PC-9 (cell line): ENCODE measurements at regions of chr1 and their contacts with region 1.

Region 1: DNA sequence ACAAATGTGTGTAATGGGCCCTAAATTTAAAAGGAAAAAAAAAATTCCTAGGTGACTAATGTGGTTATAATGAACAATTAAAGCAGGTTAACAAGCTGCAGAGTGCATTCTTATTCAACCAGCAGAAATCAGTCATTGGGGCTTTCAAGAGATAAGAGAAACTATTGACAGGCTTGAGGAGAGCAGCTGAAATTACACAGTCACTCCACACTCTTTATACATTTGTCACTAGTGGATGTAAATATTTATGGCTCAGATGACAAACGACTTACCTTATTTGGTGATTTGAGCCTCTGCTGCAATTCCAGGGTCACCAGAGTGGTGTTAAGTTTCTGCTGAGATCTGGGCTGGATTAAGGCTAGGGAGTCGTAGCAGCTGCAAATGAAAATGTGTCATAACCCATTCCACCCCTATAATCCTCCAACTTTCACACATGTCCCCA is 896.3 kb downstream of the TTLL7 start:
- DNase-seq: peak; percentile 45 to 97
- H3K4me3 ChIP-seq: no peak overlapping the region
- H3K27ac ChIP-seq: peak overlapping the region; percentile 65
- H3K4me1 ChIP-seq: peaks cover 41% of the 10 kb centered on the region
- H3K27me3 ChIP-seq: no peaks in the 10 kb centered on the region
- CTCF ChIP-seq: no peak

Region 2: GRCh38 chr1:83055410-83056134 is 47.1 kb before region 1 on chr1:
- CTCF ChIA-PET with region 1: no interaction called
- POLR2A ChIA-PET with region 1: no interaction called
- intact Hi-C with region 1: loop called (anchors 1 kb)
- DNase-seq: peak; percentile 67 to 99
- H3K4me3 ChIP-seq: peak overlapping the region; percentile 10; the same call in 1 of the 2 replicates
- H3K27ac ChIP-seq: peak overlapping the region; percentile 82
- H3K4me1 ChIP-seq: peaks cover 56% of the 10 kb centered on the region
- H3K27me3 ChIP-seq: no peaks in the 10 kb centered on the region
- CTCF ChIP-seq: no peak

Region 3: DNA sequence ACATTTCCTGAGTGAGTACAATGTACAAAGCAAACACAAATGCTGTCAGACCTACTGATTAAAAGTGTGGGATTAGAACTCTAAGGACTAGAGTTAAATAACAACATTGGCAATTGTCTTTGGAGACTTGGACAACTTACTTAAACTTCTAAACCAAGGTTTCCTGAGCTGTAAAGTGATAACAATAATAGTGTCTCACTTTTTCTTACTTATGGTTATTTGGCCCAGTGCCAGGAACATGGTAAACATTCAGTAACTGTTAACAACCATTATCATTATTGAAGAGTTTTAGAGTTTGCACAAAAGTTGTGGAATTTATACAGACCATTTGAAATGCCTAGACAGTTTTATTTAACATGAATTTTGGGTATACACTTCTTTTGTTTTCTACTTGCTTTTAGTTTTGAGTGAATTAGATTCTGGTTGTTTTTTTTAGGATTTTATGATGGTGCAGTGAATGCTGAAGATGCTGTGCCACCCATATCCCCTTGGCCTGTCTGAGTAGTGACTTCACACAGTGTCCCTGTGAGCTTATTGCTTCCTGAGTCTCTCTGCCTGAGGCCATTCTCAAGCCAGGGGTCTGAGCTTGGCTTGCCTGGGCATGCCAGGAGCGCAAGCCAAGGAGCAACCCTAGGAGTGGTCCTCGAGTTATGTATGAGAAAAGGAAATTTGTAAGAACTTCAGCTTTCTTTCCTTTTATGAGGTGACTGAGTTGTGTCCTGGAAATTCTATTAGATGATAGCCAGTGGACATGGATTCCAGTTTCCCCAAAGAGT is 36.5 kb before region 1 on chr1:
- CTCF ChIA-PET with region 1: no interaction called
- POLR2A ChIA-PET with region 1: no interaction called
- intact Hi-C with region 1: loop called (anchors 1 kb)
- DNase-seq: no peak
- H3K4me3 ChIP-seq: no peak overlapping the region
- H3K27ac ChIP-seq: no peak overlapping the region
- H3K4me1 ChIP-seq: peaks cover 10% of the 10 kb centered on the region; the same call in 1 of the 2 replicates
- H3K27me3 ChIP-seq: no peaks in the 10 kb centered on the region
- CTCF ChIP-seq: no peak

Region 4: DNA sequence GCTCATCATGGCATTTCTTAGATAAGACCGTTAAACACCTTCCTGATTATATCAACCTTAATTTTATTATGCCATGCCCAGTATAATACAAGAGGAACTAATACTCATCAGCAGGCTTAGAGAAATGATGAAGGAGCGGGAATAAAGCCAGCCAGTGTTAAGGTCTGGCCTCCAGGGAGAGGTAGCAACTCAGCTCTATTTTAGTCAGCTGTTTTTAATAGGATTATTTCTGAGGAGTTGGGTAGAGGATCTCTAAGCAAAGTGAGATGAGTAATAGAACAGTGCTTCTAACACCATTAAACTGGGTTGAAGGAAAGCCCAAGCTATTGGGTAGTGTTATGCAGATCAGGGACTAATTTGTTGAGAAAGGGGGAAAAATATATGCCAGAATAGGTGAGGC is 25.2 kb before region 1 on chr1:
- CTCF ChIA-PET with region 1: no interaction called
- POLR2A ChIA-PET with region 1: no interaction called
- intact Hi-C with region 1: no loop called
- DNase-seq: no peak
- H3K4me3 ChIP-seq: no peak overlapping the region
- H3K27ac ChIP-seq: no peak overlapping the region
- H3K4me1 ChIP-seq: no peaks in the 10 kb centered on the region
- H3K27me3 ChIP-seq: no peaks in the 10 kb centered on the region
- CTCF ChIP-seq: no peak